Posterior cingulate gyrus (tissue), 11 donors: ENCODE measurements at regions of chr13 and their contacts with region 1.

Region 1: GRCh38 chr13:39415008-39415802 is 187.8 kb downstream of the LHFPL6 start:
- DNase-seq: peak in 7 of 10 donors; percentile 42 to 93 (median 52)

Region 2: GRCh38 chr13:39144941-39145533 is 270.2 kb before region 1 on chr13:
- intact Hi-C with region 1: loop called (anchors 10 kb)
- DNase-seq: peak in 9 of 10 donors; percentile 19 to 88 (median 61)

Region 3: GRCh38 chr13:39602614-39603366 is 187.6 kb after region 1 on chr13 and contains the start of gene LHFPL6:
- intact Hi-C with region 1: loop called (anchors 2 kb)
- DNase-seq: peak; percentile 64 to 97 (median 74)